ENCODE measurements at regions of chr6 and their contacts with region 1.

Region 1: GRCh38 chr6:31795616-31796298 is at the start of gene VARS1:
- DNase-seq: peak; percentile 99
- H3K4me3 Mint-ChIP-seq: peak within 1 kb of the TSS; percentile 84
- H3K27ac Mint-ChIP-seq: peak within 1 kb of the TSS; percentile 93
- H3K4me1 Mint-ChIP-seq: peaks cover 40% of the 10 kb centered on the region
- H3K27me3 Mint-ChIP-seq: no peaks in the 10 kb centered on the region
- CTCF ChIP-seq: peak; percentile 96
- total RNA-seq, gene VARS1: 316 and 331 TPM in 2 replicates

Region 2: DNA sequence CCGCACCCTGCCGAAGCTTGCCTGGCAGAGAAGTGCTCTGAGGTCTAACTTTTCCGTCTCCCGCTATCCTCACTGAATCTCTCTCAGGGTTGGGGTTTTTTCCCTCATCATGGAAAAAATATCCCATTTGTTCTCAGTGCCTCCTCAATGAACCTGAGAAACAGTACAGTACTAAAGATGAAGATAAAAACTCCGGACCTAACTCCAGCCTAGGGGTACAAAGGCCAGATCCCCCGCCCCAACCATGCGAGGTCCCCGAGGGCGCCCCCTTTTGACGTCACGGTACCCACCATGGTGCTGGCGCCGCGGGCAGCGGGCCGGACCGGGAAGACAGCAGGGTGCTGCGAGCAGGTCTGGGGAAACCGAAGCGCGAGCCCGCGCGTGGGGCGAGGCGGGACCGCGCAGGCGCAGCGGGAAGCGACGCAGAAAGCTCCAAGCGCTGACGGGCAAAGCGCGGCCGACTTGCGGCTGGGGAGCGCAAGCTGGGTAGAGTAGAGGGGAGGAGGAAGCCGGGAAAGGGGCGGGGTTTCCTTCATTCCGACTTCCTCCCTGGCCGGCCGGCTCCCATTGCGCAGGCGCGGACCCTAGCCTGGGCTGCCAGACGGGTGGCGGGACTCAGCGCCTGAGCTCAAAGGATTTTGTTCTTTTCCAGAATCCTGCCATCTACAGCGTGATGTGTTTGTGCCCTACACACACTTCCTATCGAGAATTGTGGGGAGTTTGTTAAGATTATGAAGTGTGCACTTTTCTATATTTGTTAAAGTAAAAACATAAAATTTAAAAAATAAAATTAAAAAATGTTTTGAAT is 10.9 kb after region 1 on chr6 and contains the start of gene LSM2:
- CTCF ChIA-PET with region 1: interaction called, 17 read pairs
- intact Hi-C with region 1: no loop called
- DNase-seq: peak; percentile 100
- H3K4me3 Mint-ChIP-seq: peak within 1 kb of the TSS; percentile 99
- H3K27ac Mint-ChIP-seq: peak within 1 kb of the TSS; percentile 96
- H3K4me1 Mint-ChIP-seq: peaks cover 19% of the 10 kb centered on the region
- H3K27me3 Mint-ChIP-seq: no peaks in the 10 kb centered on the region
- CTCF ChIP-seq: peak; percentile 89
- total RNA-seq, gene LSM2: 126 and 144 TPM in 2 replicates

Region 3: GRCh38 chr6:31815025-31815838 is 19.5 kb after region 1 on chr6 and contains the starts of genes HSPA1A and HSPA1L:
- CTCF ChIA-PET with region 1: interaction called, 19 read pairs
- intact Hi-C with region 1: loop called (anchors 2 kb)
- DNase-seq: peak; percentile 100
- H3K4me3 Mint-ChIP-seq: peak within 1 kb of the TSS; percentile 79
- H3K27ac Mint-ChIP-seq: peak within 1 kb of the TSS; percentile 97
- H3K4me1 Mint-ChIP-seq: peaks cover 25% of the 10 kb centered on the region
- H3K27me3 Mint-ChIP-seq: no peaks in the 10 kb centered on the region
- CTCF ChIP-seq: no peak
- total RNA-seq, gene HSPA1A: 1,238 and 1,263 TPM in 2 replicates
- total RNA-seq, gene HSPA1L: 4.2 and 4.3 TPM in 2 replicates

Region 4: GRCh38 chr6:31822036-31822821 is 26.5 kb after region 1 on chr6:
- CTCF ChIA-PET with region 1: interaction called, 16 read pairs
- intact Hi-C with region 1: loop called (anchors 2 kb)
- DNase-seq: peak; percentile 93
- H3K4me3 Mint-ChIP-seq: peak overlapping the region; percentile 89
- H3K27ac Mint-ChIP-seq: peak overlapping the region; percentile 95
- H3K4me1 Mint-ChIP-seq: peaks cover 64% of the 10 kb centered on the region
- H3K27me3 Mint-ChIP-seq: peaks cover 5% of the 10 kb centered on the region
- CTCF ChIP-seq: no peak

Region 5: DNA sequence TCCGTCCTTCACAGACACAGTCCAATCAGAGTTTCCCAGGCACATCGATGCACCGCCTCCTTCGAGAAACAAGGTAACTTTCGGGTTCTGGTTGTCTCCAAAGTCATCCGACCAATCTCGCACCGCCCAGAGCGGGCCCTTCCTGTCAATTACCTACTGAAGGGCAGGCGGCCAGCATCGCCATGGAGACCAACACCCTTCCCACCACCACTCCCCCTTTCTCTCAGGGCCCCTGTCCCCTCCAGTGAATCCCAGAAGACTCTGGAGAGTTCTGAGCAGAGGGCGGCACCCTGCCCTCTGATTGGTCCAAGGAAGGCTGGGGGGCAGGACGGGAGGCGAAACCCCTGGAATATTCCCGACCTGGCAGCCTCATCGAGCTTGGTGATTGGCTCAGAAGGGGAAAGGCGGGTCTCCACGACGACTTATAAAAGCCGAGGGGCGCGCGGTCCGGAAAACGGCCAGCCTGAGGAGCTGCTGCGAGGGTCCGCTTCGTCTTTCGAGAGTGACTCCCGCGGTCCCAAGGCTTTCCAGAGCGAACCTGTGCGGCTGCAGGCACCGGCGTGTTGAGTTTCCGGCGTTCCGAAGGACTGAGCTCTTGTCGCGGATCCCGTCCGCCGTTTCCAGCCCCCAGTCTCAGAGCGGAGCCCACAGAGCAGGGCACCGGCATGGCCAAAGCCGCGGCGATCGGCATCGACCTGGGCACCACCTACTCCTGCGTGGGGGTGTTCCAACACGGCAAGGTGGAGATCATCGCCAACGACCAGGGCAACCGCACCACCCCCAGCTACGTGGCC is 31.7 kb after region 1 on chr6 and contains the start of gene HSPA1B:
- CTCF ChIA-PET with region 1: interaction called, 16 read pairs
- intact Hi-C with region 1: loop called (anchors 5 kb)
- DNase-seq: peak; percentile 100
- H3K4me3 Mint-ChIP-seq: peak within 1 kb of the TSS; percentile 80
- H3K27ac Mint-ChIP-seq: peak within 1 kb of the TSS; percentile 100
- H3K4me1 Mint-ChIP-seq: peaks cover 45% of the 10 kb centered on the region
- H3K27me3 Mint-ChIP-seq: peaks cover 13% of the 10 kb centered on the region
- CTCF ChIP-seq: no peak
- total RNA-seq, gene HSPA1B: 687 and 705 TPM in 2 replicates

Region 6: GRCh38 chr6:31834434-31835198 is 38.9 kb after region 1 on chr6:
- CTCF ChIA-PET with region 1: interaction called, 10 read pairs
- intact Hi-C with region 1: loop called (anchors 5 kb)
- DNase-seq: peak; percentile 96
- H3K4me3 Mint-ChIP-seq: peak overlapping the region; percentile 89
- H3K27ac Mint-ChIP-seq: peak overlapping the region; percentile 99
- H3K4me1 Mint-ChIP-seq: peaks cover 39% of the 10 kb centered on the region
- H3K27me3 Mint-ChIP-seq: no peaks in the 10 kb centered on the region
- CTCF ChIP-seq: no peak

Measured in Calu3 (cell line).